ENCODE measurements at regions of chr3 and their contacts with region 1.

Region 1: GRCh38 chr3:179063945-179064560 is 7.6 kb downstream of the ZMAT3 start:
- DNase-seq: no peak
- ATAC-seq: no peak

Region 2: GRCh38 chr3:179074656-179075055 is 10.6 kb after region 1 on chr3:
- intact Hi-C with region 1: loop called (anchors 1 kb)
- DNase-seq: no peak
- ATAC-seq: no peak